Activated CD4-positive, alpha-beta memory T cell treated with anti-CD3 and anti-CD28 coated beads, Interleukin-2, amount 10 ng/mL, durations not matched to agents 7 days and 5 days (primary cell): ENCODE measurements at regions of chr2 and their contacts with region 1.

Region 1: GRCh38 chr2:84925724-84926376 is 20.4 kb downstream of the TMSB10 start:
- DNase-seq: peak; percentile 99
- H3K4me3 Mint-ChIP-seq: peak overlapping the region; percentile 82
- H3K27ac Mint-ChIP-seq: peak overlapping the region; percentile 78
- H3K4me1 Mint-ChIP-seq: peaks cover 43% of the 10 kb centered on the region
- H3K27me3 Mint-ChIP-seq: no peaks in the 10 kb centered on the region

Region 2: GRCh38 chr2:84495539-84496146 is 430.2 kb before region 1 on chr2:
- CTCF ChIA-PET with region 1: interaction called, 10 read pairs
- POLR2A ChIA-PET with region 1: interaction called, 4 read pairs
- DNase-seq: peak; percentile 29
- H3K4me3 Mint-ChIP-seq: no peak overlapping the region
- H3K27ac Mint-ChIP-seq: no peak overlapping the region
- H3K4me1 Mint-ChIP-seq: peaks cover 12% of the 10 kb centered on the region
- H3K27me3 Mint-ChIP-seq: no peaks in the 10 kb centered on the region

Region 3: GRCh38 chr2:84856787-84857186 is 69.1 kb before region 1 on chr2:
- CTCF ChIA-PET with region 1: interaction called, 17 read pairs
- POLR2A ChIA-PET with region 1: interaction called, 4 read pairs
- DNase-seq: peak; percentile 58
- H3K4me3 Mint-ChIP-seq: no peak overlapping the region
- H3K27ac Mint-ChIP-seq: peak overlapping the region; percentile 70
- H3K4me1 Mint-ChIP-seq: peaks cover 77% of the 10 kb centered on the region
- H3K27me3 Mint-ChIP-seq: no peaks in the 10 kb centered on the region

Region 4: GRCh38 chr2:84881581-84882414 is 44.1 kb before region 1 on chr2:
- CTCF ChIA-PET with region 1: interaction called, 98 read pairs
- POLR2A ChIA-PET with region 1: interaction called, 68 read pairs
- DNase-seq: peak; percentile 90
- H3K4me3 Mint-ChIP-seq: peak overlapping the region; percentile 91
- H3K27ac Mint-ChIP-seq: peak overlapping the region; percentile 87
- H3K4me1 Mint-ChIP-seq: peaks cover 51% of the 10 kb centered on the region
- H3K27me3 Mint-ChIP-seq: no peaks in the 10 kb centered on the region

Region 5: GRCh38 chr2:84905181-84906107 is 20.4 kb before region 1 on chr2 and contains the start of gene TMSB10:
- CTCF ChIA-PET with region 1: interaction called, 105 read pairs
- POLR2A ChIA-PET with region 1: interaction called, 210 read pairs
- DNase-seq: peak; percentile 91
- H3K4me3 Mint-ChIP-seq: peak within 1 kb of the TSS; percentile 89
- H3K27ac Mint-ChIP-seq: peak within 1 kb of the TSS; percentile 94
- H3K4me1 Mint-ChIP-seq: peaks cover 67% of the 10 kb centered on the region
- H3K27me3 Mint-ChIP-seq: no peaks in the 10 kb centered on the region
- total RNA-seq, gene TMSB10: 5,686 to 5,768 TPM

Region 6: DNA sequence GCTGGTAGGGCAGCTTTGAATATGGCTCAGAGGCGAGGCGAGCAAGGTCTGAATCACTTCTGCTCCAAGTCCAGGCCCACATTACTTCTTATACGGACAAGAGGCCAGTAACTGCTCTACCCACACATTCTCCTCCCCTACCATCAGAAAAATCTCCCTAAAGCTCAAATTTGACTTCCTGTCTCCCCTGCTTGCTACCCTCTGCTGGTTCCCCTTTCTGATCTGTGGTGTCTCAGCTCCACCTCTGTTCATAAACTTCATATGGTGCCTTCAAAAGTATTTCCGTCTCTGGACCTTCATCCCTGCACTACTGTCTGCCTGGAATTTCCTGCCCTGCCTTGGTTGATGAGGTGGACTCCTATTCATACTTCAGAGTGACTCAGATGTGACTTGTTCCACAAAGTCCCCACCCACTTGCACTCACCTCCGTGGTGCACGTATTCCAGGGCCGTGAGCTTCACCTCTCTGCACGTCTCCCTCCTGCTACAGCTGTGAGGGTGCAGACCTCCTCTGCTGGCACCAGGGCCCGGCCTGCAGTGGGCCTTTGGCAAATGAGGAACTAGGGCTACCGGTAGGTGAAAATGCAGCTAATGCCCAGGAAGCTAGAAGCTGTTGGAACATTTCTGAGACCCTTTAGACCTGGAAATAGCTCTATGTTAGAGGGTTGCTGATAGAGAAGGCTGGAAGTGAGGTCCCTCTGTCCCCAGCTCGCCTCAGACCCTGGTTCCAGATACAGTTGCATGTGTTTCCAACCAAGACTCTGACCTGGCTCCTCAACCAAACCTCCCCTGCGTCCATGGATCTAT is 20.6 kb after region 1 on chr2:
- CTCF ChIA-PET with region 1: interaction called, 50 read pairs
- POLR2A ChIA-PET with region 1: interaction called, 90 read pairs
- DNase-seq: peak; percentile 69
- H3K4me3 Mint-ChIP-seq: peak overlapping the region; percentile 31
- H3K27ac Mint-ChIP-seq: peak overlapping the region; percentile 89
- H3K4me1 Mint-ChIP-seq: peaks cover 42% of the 10 kb centered on the region
- H3K27me3 Mint-ChIP-seq: no peaks in the 10 kb centered on the region

Region 7: DNA sequence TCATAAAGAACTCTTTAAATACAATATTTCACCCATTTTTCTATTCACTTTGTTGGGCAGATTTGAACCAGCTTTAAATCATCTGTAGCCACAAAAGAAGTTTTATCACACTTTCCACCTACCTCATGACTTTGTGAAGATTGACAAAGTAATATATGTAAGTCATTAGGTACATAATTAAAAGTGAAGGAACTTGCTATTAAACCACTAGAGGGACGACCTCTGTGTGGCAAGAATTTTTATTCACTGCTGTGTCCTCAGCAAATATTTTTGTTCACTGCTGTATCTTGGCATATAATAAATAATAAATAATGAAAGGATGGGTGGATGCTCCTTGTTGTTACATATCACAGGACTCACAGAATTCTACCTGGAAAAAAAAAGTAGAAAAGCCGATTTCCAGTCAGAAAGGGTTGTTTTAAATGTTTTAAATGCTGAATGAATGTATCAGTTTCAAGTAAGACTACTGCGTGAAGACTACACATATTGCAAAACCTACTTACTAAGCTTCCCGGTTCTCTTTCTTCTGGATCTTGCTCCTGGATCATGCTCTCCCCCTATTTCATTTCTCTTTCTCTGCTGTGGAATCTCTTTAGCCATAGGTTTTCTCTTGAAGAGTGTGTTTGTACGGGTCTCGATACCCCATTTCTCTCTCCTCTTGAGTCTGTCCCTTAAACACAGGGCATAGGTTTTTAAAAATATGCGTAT is 90.0 kb after region 1 on chr2:
- CTCF ChIA-PET with region 1: interaction called, 24 read pairs
- POLR2A ChIA-PET with region 1: interaction called, 6 read pairs
- DNase-seq: no peak
- H3K4me3 Mint-ChIP-seq: no peak overlapping the region
- H3K27ac Mint-ChIP-seq: no peak overlapping the region
- H3K4me1 Mint-ChIP-seq: peaks cover 56% of the 10 kb centered on the region
- H3K27me3 Mint-ChIP-seq: no peaks in the 10 kb centered on the region

Region 8: GRCh38 chr2:85111819-85112281 is 186.0 kb after region 1 on chr2:
- CTCF ChIA-PET with region 1: no interaction called
- POLR2A ChIA-PET with region 1: no interaction called
- DNase-seq: no peak
- H3K4me3 Mint-ChIP-seq: no peak overlapping the region
- H3K27ac Mint-ChIP-seq: no peak overlapping the region
- H3K4me1 Mint-ChIP-seq: no peaks in the 10 kb centered on the region
- H3K27me3 Mint-ChIP-seq: peaks cover 26% of the 10 kb centered on the region

Region 9: GRCh38 chr2:85162746-85163301 is 237.0 kb after region 1 on chr2:
- CTCF ChIA-PET with region 1: no interaction called
- POLR2A ChIA-PET with region 1: no interaction called
- DNase-seq: no peak
- H3K4me3 Mint-ChIP-seq: no peak overlapping the region
- H3K27ac Mint-ChIP-seq: peak overlapping the region; percentile 27
- H3K4me1 Mint-ChIP-seq: no peaks in the 10 kb centered on the region
- H3K27me3 Mint-ChIP-seq: peaks cover 7% of the 10 kb centered on the region